ENCODE measurements at regions of chr13 and their contacts with region 1.

Region 1: DNA sequence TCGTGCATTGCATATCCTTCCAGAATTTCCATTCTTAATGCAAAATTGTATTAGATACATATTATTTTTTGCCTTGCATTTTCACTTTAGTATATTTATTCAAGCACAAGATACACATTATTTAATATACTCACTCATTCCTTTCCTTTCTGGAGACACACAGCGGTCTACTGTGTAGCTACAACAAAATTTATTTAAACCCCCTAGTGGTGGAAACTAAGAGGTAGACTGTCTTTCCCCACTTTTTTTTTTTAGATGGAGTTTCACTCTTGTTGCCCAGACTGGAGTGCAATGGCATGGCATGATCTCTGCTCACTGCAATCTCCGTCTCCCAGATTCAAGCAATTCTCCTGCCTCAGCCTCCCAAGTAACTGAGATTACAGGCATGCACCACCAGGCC is 2040.3 kb upstream of the PCDH20 start:
- DNase-seq: peak in 1 of 2 experiments; percentile 17
- H3K4me3 ChIP-seq: no peak overlapping the region
- H3K4me3 Mint-ChIP-seq: no peak overlapping the region
- H3K27ac Mint-ChIP-seq: no peak overlapping the region
- H3K4me1 ChIP-seq: no peaks in the 10 kb centered on the region
- H3K4me1 Mint-ChIP-seq: no peaks in the 10 kb centered on the region
- H3K27me3 ChIP-seq: no peaks in the 10 kb centered on the region
- H3K27me3 Mint-ChIP-seq: peaks cover 5% of the 10 kb centered on the region
- CTCF ChIP-seq: peak; percentile 42 to 53

Region 2: DNA sequence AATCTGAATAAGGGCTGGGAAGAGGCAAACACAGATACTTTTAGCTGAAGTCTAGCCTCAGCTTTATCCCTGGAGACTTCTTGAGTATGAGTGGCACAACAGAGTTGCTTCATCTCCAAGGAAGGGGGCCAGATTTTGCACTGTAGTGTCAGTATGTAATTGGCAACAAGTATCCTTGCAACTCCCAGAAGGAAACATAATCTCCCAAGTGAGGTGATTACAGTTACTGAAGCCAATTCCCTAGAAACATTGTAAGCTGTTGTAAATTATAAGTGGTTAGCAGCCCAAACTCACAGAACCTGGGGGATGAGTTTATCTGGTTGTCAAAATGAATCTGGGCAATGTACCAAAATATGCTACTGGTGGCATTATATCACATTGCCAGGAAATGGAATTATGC is 25.4 kb after region 1 on chr13:
- CTCF ChIA-PET with region 1: no interaction called
- POLR2A ChIA-PET with region 1: no interaction called
- intact Hi-C with region 1: loop called (anchors 1 kb)
- DNase-seq: no peak
- H3K4me3 ChIP-seq: no peak overlapping the region
- H3K4me3 Mint-ChIP-seq: no peak overlapping the region
- H3K27ac Mint-ChIP-seq: no peak overlapping the region
- H3K4me1 ChIP-seq: no peaks in the 10 kb centered on the region
- H3K4me1 Mint-ChIP-seq: no peaks in the 10 kb centered on the region
- H3K27me3 ChIP-seq: no peaks in the 10 kb centered on the region
- H3K27me3 Mint-ChIP-seq: peaks cover 2% of the 10 kb centered on the region
- CTCF ChIP-seq: no peak